ENCODE measurements at regions of chr1 and their contacts with region 1.

Region 1: GRCh38 chr1:89820422-89821321 is at the start of gene LRRC8D:
- DNase-seq: peak; percentile 76
- H3K4me3 Mint-ChIP-seq: peak within 1 kb of the TSS; percentile 89
- H3K27ac Mint-ChIP-seq: no peak within 1 kb of the TSS
- H3K4me1 Mint-ChIP-seq: peaks cover 38% of the 10 kb centered on the region
- H3K27me3 Mint-ChIP-seq: peaks cover 6% of the 10 kb centered on the region
- CTCF ChIP-seq: no peak
- total RNA-seq, gene LRRC8D: 42.0 and 43.7 TPM in 2 replicates

Region 2: GRCh38 chr1:89804642-89805237 is 15.9 kb before region 1 on chr1:
- CTCF ChIA-PET with region 1: interaction called, 5 read pairs
- POLR2A ChIA-PET with region 1: interaction called, 13 read pairs
- intact Hi-C with region 1: no loop called
- DNase-seq: peak; percentile 85
- H3K4me3 Mint-ChIP-seq: no peak overlapping the region
- H3K27ac Mint-ChIP-seq: no peak overlapping the region
- H3K4me1 Mint-ChIP-seq: no peaks in the 10 kb centered on the region
- H3K27me3 Mint-ChIP-seq: no peaks in the 10 kb centered on the region
- CTCF ChIP-seq: peak; percentile 83

Region 3: DNA sequence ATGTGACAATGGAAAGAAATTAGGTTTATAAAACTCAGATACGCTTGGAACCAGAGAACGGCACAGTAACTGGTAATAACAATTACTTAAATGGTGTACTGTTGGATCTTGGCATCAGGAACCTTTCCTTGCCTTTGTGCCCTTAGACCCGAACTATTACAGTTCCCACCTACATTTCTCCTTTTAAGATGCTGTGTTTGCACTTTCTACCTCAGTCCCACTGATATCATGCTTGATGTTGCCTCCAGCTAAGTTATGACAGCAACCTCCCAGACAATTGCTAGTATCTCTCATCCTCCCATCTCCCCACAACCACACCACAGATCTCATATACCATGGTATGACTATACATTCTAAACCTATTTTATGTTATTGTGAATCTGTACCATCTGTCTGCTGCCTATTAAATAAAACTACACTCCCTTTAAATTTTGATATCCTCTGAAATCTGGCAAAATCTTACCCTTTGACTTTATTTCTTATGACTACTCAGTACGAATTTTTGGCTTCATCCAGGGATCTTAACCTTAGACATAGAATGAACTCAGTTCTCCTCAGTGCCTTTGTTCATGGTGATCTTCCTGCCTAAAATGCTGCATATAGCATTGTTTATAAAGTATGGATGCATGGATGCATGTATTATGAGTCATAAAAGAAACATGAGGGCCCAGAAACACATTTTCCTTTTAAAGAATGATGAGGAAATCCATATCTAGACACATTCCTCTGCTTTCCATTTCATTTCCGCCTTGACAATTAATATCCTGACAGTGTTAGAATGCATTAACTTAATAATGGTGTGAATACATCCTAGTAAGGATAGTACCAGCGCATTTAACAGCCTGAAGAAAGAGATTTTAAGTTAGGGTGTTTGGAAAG is 64.3 kb after region 1 on chr1:
- CTCF ChIA-PET with region 1: no interaction called
- POLR2A ChIA-PET with region 1: interaction called, 28 read pairs
- intact Hi-C with region 1: loop called (anchors 5 kb)
- DNase-seq: peak; percentile 52
- H3K4me3 Mint-ChIP-seq: no peak overlapping the region
- H3K27ac Mint-ChIP-seq: peak overlapping the region; percentile 29
- H3K4me1 Mint-ChIP-seq: peaks cover 46% of the 10 kb centered on the region
- H3K27me3 Mint-ChIP-seq: no peaks in the 10 kb centered on the region
- CTCF ChIP-seq: no peak

Region 4: GRCh38 chr1:89890085-89890752 is 69.5 kb after region 1 on chr1:
- CTCF ChIA-PET with region 1: no interaction called
- POLR2A ChIA-PET with region 1: interaction called, 28 read pairs
- intact Hi-C with region 1: loop called (anchors 5 kb)
- DNase-seq: peak; percentile 99
- H3K4me3 Mint-ChIP-seq: peak overlapping the region; percentile 70
- H3K27ac Mint-ChIP-seq: peak overlapping the region; percentile 87
- H3K4me1 Mint-ChIP-seq: peaks cover 63% of the 10 kb centered on the region
- H3K27me3 Mint-ChIP-seq: no peaks in the 10 kb centered on the region
- CTCF ChIP-seq: no peak

Region 5: DNA sequence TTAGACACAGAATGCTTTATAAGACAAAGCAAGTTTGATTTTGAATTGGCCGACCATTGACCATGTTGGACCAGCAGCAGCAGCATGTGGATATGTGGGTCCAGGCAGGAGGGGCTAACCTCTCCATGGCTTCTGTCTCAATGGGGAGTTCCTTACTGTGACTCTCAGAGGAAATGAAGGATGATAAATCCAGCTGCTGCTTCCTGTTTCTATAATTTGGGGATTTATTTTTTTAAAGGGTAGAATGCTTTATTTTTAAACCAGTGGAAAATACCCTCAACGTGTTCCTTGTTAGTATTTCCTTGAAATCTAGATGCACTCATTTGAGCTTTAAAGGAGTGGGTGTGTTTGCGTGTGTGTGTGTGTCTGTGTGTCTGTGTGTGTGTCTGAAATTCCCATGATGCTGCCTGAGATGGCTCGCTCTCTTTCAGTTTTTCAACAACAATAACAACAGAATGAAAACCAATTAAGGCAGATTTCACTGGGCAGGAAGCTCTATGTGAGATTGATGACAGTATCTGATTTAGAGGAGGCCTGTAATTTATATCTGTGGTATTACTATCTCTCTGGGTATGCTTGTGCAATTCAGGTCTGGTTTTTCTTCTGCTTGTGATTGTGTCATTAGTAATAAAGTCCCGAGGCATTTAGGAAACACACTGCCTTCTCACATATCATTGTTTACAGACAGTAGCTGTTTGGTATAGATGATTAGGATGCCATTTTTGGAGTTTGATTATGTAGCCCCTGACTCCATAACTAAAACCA is 88.2 kb after region 1 on chr1:
- CTCF ChIA-PET with region 1: interaction called, 3 read pairs
- POLR2A ChIA-PET with region 1: interaction called, 11 read pairs
- intact Hi-C with region 1: no loop called
- DNase-seq: peak; percentile 66
- H3K4me3 Mint-ChIP-seq: no peak overlapping the region
- H3K27ac Mint-ChIP-seq: peak overlapping the region; percentile 85
- H3K4me1 Mint-ChIP-seq: peaks cover 41% of the 10 kb centered on the region
- H3K27me3 Mint-ChIP-seq: no peaks in the 10 kb centered on the region
- CTCF ChIP-seq: no peak

Region 6: DNA sequence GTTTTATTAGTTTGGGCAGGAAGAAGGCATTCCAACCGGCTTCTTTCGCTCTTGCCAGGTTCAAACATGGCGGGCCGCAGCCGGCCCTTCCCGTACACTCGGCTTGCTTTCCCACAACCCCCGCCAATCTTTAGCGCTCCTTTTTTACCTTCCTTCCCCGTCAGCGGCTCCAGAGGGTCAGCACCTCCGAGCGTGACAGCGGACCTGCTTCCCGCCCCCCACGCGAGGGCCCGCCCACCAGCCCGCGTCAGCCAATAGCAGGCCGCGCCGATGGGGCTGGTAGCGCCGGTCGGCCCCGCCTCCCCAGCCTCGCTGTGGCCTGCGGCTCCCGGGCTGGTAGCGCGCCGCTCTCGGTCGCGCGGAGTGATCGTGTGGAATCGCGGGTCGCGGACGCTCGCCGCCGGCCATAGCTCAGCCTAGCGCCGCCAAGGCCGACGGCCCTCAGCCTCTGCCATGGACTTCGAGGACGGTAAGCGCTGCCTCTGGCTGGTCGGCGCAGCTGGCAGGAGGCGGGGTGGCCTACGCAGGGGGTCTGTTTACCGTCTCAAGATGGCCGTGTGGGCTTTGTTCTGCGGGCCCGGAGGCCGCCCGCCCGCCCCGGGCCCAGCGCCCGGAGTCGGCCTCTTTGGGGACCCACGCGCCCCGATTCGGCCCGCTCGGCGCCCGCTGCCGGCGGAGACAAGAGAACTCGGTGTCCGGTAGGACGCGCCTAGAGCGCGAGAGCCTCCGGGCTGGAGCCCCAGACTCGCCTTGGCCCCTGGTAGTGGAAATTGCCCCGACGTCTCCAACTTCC is 174.3 kb after region 1 on chr1 and contains the start of gene ZNF326:
- CTCF ChIA-PET with region 1: interaction called, 3 read pairs
- POLR2A ChIA-PET with region 1: interaction called, 11 read pairs
- intact Hi-C with region 1: loop called (anchors 5 kb)
- DNase-seq: peak; percentile 97
- H3K4me3 Mint-ChIP-seq: peak within 1 kb of the TSS; percentile 94
- H3K27ac Mint-ChIP-seq: peak within 1 kb of the TSS; percentile 96
- H3K4me1 Mint-ChIP-seq: peaks cover 43% of the 10 kb centered on the region
- H3K27me3 Mint-ChIP-seq: no peaks in the 10 kb centered on the region
- CTCF ChIP-seq: no peak
- total RNA-seq, gene ZNF326: 28.9 and 32.9 TPM in 2 replicates